ENCODE measurements at regions of chr14 and their contacts with region 1.

Region 1: GRCh38 chr14:24327303-24327702 is 7.6 kb downstream of the ADCY4 start:
- DNase-seq: no peak
- ATAC-seq: no peak
- H3K4me3 ChIP-seq: no peak overlapping the region
- H3K27ac ChIP-seq: no peak overlapping the region
- H3K4me1 ChIP-seq: peaks cover under 1% of the 10 kb centered on the region; the same call in 1 of the 3 replicates
- CTCF ChIP-seq: no peak
- EP300 ChIP-seq: no peak
- POLR2A ChIP-seq: no peak
- RAD21 ChIP-seq: no peak

Region 2: GRCh38 chr14:24315807-24316603 is 11.3 kb before region 1 on chr14:
- CTCF ChIA-PET with region 1: interaction called, 124 read pairs
- POLR2A ChIA-PET with region 1: no interaction called
- DNase-seq: no peak
- ATAC-seq: no peak
- H3K4me3 ChIP-seq: no peak overlapping the region
- H3K27ac ChIP-seq: no peak overlapping the region
- H3K4me1 ChIP-seq: peaks cover 11% of the 10 kb centered on the region
- CTCF ChIP-seq: no peak
- EP300 ChIP-seq: no peak
- POLR2A ChIP-seq: no peak
- RAD21 ChIP-seq: no peak

Region 3: GRCh38 chr14:24339284-24340151 is 12.2 kb after region 1 on chr14 and contains the start of gene RIPK3:
- CTCF ChIA-PET with region 1: interaction called, 37 read pairs
- POLR2A ChIA-PET with region 1: no interaction called
- DNase-seq: no peak
- ATAC-seq: no peak
- H3K4me3 ChIP-seq: no peak within 1 kb of the TSS
- H3K27ac ChIP-seq: no peak within 1 kb of the TSS
- H3K4me1 ChIP-seq: no peaks in the 10 kb centered on the region
- CTCF ChIP-seq: no peak
- EP300 ChIP-seq: no peak
- POLR2A ChIP-seq: no peak
- RAD21 ChIP-seq: no peak
- polyA plus RNA-seq, gene RIPK3: not detected in 2 replicates

Region 4: GRCh38 chr14:24442273-24443052 is 115.2 kb after region 1 on chr14 and contains the start of gene SDR39U1:
- CTCF ChIA-PET with region 1: interaction called, 1,142 read pairs
- POLR2A ChIA-PET with region 1: interaction called, 4 read pairs
- DNase-seq: peak; percentile 95 to 99
- ATAC-seq: peak; percentile 87 to 94
- H3K4me3 ChIP-seq: peak within 1 kb of the TSS; percentile 86
- H3K27ac ChIP-seq: peak within 1 kb of the TSS; percentile 97 to 98
- H3K4me1 ChIP-seq: peaks cover 6% of the 10 kb centered on the region
- CTCF ChIP-seq: no peak
- EP300 ChIP-seq: no peak
- POLR2A ChIP-seq: peak; percentile 85
- RAD21 ChIP-seq: no peak
- polyA plus RNA-seq, gene SDR39U1: 57.3 and 64.4 TPM in 2 replicates